ENCODE measurements at regions of chr19 and their contacts with region 1.

Region 1: GRCh38 chr19:18675779-18676178 is 7.7 kb upstream of the CRTC1 start:
- H3K4me3 ChIP-seq: no peak overlapping the region
- H3K27ac ChIP-seq: no peak overlapping the region
- H3K4me1 ChIP-seq: no peaks in the 10 kb centered on the region
- CTCF ChIP-seq: no peak; the same call in 1 of the 2 replicates

Region 2: GRCh38 chr19:18594096-18594823 is 81.5 kb before region 1 on chr19:
- CTCF ChIA-PET with region 1: interaction called, 14 read pairs
- POLR2A ChIA-PET with region 1: interaction called, 9 read pairs
- H3K4me3 ChIP-seq: peak overlapping the region; percentile 41
- H3K27ac ChIP-seq: no peak overlapping the region
- H3K4me1 ChIP-seq: no peaks in the 10 kb centered on the region
- CTCF ChIP-seq: peak; percentile 63

Region 3: DNA sequence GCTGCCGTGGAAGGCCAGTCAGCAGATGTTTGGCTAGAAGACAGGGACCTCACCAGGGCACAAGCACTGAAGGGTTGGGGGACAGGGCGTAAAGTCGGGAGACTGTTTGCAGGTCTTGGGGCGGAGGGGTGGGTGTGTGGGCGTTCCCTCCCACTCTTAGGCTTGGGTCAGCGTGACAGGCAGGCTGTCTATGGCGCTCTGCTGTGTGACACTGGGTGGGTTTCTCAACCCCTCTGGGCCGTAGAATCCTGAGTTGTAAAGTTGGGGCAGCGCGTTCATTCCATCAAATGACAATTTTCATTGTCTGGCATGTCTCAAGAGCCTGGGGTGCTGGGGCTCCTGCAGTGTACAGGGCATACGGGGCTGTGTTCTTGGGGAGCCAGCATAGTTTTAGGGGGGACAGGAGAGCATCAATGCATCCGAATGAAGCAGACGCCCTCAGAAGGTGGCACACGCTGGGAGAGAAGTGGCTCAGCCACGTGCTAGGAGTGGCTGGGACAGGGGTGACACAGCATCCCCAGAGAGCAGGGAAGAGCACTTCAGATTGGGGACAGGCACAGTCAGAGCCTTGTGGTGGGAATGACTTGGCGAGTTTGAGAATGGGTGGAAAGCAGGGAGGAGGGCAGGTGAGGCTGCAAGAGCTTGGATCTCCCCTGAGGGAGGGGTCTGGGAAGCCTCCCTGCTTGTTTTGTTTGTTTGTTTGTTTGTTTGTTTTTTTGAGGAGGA is 12.1 kb after region 1 on chr19:
- CTCF ChIA-PET with region 1: no interaction called
- POLR2A ChIA-PET with region 1: no interaction called
- H3K4me3 ChIP-seq: no peak overlapping the region
- H3K27ac ChIP-seq: no peak overlapping the region
- H3K4me1 ChIP-seq: no peaks in the 10 kb centered on the region
- CTCF ChIP-seq: no peak